ENCODE measurements at regions of chr1 and their contacts with region 1.

Region 1: DNA sequence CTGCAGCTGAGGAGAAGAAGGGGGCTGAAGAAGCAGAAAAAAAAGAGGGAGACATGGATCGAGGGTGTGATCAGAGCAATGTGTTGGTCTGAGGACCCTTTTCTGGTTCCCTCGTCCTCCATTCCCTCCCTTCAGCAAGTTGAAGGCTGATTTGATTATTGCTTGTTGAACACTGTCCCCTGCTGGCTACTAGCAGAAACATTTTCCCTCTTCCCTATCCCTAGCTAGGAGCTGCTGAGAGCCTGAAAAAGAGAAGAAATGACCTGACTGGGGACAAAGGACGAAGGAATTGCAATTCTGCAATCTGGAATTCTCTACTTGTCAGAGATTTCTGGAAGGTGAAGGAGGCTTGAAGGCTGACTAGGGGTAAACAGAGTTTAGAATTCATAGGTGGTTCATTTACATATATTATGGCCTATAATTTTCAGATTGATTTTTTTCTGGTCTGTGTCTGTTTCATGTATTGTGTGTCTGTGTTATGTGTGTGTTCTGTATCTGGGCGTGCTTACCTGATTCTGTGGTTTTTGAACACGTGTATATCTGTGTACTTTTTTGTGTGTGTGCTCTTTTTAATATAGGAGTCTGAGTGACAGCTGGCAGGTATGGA is 9.8 kb downstream of the NHLH1 start:
- DNase-seq: no peak
- H3K4me3 ChIP-seq: peak overlapping the region in 1 of 4 experiments; percentile 30; a peak in 1 of 8 replicates
- H3K27ac ChIP-seq: no peak overlapping the region
- H3K4me1 ChIP-seq: peaks cover 8 to 21% (median 16%) of the 10 kb centered on the region in 4 experiments
- H3K27me3 ChIP-seq: no peaks in the 10 kb centered on the region
- CTCF ChIP-seq: peak; percentile 20 to 100 (median 94)
- EP300 ChIP-seq: no peak
- POLR2A ChIP-seq: no peak
- RAD21 ChIP-seq: peak; percentile 98 to 99

Region 2: GRCh38 chr1:160342953-160343869 is 33.4 kb before region 1 on chr1 and contains the starts of genes COPA and NCSTN:
- CTCF ChIA-PET with region 1: interaction called, 683 read pairs
- POLR2A ChIA-PET with region 1: interaction called, 3 read pairs
- DNase-seq: peak; percentile 71 to 90
- H3K4me3 ChIP-seq: peak within 1 kb of the TSS; percentile 88 to 98 (median 94)
- H3K27ac ChIP-seq: peak within 1 kb of the TSS; percentile 88
- H3K4me1 ChIP-seq: no peaks in the 10 kb centered on the region; a peak in 1 of 7 replicates
- H3K27me3 ChIP-seq: no peaks in the 10 kb centered on the region
- CTCF ChIP-seq: no peak
- EP300 ChIP-seq: no peak
- POLR2A ChIP-seq: peak; percentile 86 to 95
- RAD21 ChIP-seq: no peak
- total RNA-seq, gene COPA: 115 TPM in 2 replicates
- total RNA-seq, gene NCSTN: 64.7 and 70.1 TPM in 2 replicates

Region 3: GRCh38 chr1:160398823-160399222 is 22.2 kb after region 1 on chr1:
- CTCF ChIA-PET with region 1: interaction called, 51 read pairs
- POLR2A ChIA-PET with region 1: interaction called, 9 read pairs
- DNase-seq: no peak
- H3K4me3 ChIP-seq: no peak overlapping the region
- H3K27ac ChIP-seq: no peak overlapping the region
- H3K4me1 ChIP-seq: peaks cover 10 to 35% (median 21%) of the 10 kb centered on the region in 4 experiments
- H3K27me3 ChIP-seq: no peaks in the 10 kb centered on the region; a peak in 1 of 7 replicates
- CTCF ChIP-seq: no peak
- EP300 ChIP-seq: no peak
- POLR2A ChIP-seq: no peak
- RAD21 ChIP-seq: no peak

Region 4: GRCh38 chr1:160410406-160411005 is 33.9 kb after region 1 on chr1:
- CTCF ChIA-PET with region 1: interaction called, 57 read pairs
- POLR2A ChIA-PET with region 1: interaction called, 5 read pairs
- DNase-seq: peak in 1 of 2 experiments; percentile 72
- H3K4me3 ChIP-seq: peak overlapping the region in 1 of 4 experiments; percentile 32; a peak in 2 of 8 replicates
- H3K27ac ChIP-seq: peak overlapping the region; percentile 80
- H3K4me1 ChIP-seq: peaks cover 14 to 34% (median 26%) of the 10 kb centered on the region in 4 experiments
- H3K27me3 ChIP-seq: no peaks in the 10 kb centered on the region
- CTCF ChIP-seq: no peak
- EP300 ChIP-seq: no peak
- POLR2A ChIP-seq: no peak
- RAD21 ChIP-seq: no peak

Region 5: DNA sequence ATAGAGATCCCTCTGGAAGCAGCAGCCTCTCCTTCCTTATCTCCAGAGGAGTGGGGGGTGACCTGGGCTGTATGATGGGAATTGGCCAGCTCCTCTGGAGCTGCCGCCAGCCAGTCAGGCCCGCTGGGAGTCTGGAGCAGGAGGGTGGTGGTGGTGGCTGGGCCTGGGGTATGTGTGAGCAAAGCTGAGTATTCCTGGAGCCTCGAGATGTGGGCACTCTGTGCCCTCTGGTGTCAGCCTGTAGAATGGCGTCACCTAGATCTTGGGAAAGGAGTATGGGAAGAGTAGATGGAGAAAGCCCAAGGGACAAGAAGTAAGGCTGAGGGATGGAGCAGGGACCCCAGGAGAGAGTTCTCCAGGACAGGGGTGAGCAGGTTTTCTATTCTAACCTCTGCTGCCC is 39.7 kb after region 1 on chr1:
- CTCF ChIA-PET with region 1: interaction called, 57 read pairs
- POLR2A ChIA-PET with region 1: interaction called, 5 read pairs
- DNase-seq: no peak
- H3K4me3 ChIP-seq: no peak overlapping the region
- H3K27ac ChIP-seq: no peak overlapping the region
- H3K4me1 ChIP-seq: peaks cover 1 to 2% (median 2%) of the 10 kb centered on the region in 4 experiments; a peak in 6 of 7 replicates
- H3K27me3 ChIP-seq: no peaks in the 10 kb centered on the region
- CTCF ChIP-seq: peak; percentile 63 to 76 (median 69)
- EP300 ChIP-seq: no peak
- POLR2A ChIP-seq: no peak
- RAD21 ChIP-seq: peak; percentile 81 to 88

Measured in H1 (cell line).